Heart right ventricle (tissue), 16 donors: ENCODE measurements at regions of chr17 and their contacts with region 1.

Region 1: GRCh38 chr17:42918902-42919521 is 18.4 kb downstream of the G6PC1 start:
- DNase-seq: no peak
- ATAC-seq: no peak
- H3K4me3 ChIP-seq: no peak overlapping the region
- H3K27ac ChIP-seq: peak overlapping the region in 1 of 10 donors; percentile 67
- H3K4me1 ChIP-seq: peaks cover 0 to 49% (median 16%) of the 10 kb centered on the region in 9 donors
- H3K27me3 ChIP-seq: no peaks in the 10 kb centered on the region
- CTCF ChIP-seq: no peak

Region 2: DNA sequence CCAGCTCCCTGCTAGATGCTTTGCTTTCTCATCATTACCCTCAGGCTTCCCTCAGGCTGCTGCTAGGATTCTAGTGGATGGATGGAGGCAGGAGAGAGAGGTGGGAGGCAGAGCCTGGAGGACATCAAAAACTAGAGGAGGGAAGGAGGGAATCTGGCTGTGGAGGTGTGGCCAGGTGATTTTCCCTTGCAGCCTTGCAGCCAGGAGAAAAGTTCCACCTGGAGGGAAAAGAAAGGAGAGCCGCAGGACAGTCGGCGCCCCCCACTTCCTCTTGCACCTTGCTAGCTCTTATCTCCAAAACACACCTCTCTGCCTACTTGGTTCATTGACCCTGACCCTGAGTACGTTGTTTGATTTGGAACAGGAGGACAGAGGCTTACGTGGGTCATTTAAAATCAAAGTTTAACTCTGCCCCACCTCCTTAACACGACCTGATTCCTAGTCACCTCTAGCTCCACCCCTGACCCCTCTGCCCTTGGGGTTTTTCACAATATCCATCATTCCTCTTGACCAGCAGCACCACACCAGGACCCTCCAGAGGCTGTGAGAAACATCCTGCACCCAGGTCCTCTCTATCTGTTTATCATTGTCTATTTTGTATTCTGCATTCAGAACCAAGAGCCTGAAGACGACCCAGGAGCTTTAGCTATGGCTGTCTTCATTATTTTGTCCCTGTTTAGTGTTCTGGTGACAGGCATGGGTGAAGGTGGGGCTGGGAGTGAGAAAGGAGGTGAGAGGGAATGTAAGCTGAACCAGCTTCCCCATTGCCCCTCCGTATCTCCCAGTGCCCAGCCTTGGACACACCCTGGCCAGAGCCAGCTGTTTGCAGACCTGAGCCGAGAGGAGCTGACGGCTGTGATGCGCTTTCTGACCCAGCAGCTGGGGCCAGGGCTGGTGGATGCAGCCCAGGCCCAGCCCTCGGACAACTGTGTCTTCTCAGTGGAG is 52.1 kb before region 1 on chr17:
- intact Hi-C with region 1: loop called in 1 of 10 experiments (anchors 10 kb)
- DNase-seq: no peak
- ATAC-seq: peak in 1 of 8 donors; percentile 38
- H3K4me3 ChIP-seq: no peak overlapping the region
- H3K27ac ChIP-seq: no peak overlapping the region
- H3K4me1 ChIP-seq: peaks cover 0 to 7% (median 0%) of the 10 kb centered on the region in 9 donors
- H3K27me3 ChIP-seq: no peaks in the 10 kb centered on the region
- CTCF ChIP-seq: no peak

Region 3: DNA sequence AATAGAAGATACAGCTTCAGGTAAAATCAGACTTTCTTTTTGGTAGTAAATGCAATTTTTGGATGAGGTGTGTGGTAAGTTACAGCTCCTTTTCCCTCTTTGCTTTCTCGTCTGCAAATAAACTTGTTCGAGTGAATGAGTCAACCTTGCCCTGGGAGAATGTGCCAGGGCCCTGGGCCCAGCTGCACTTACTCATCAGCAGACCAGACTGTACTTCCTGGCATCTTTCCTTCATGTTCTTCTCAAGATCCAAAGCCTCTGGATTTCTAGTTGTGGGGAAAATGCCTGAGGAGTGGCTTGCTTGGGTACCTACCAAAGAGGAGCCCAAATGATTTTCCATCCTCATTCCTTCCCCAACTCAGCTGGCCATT is 23.8 kb before region 1 on chr17:
- intact Hi-C with region 1: no loop called
- DNase-seq: peak in 1 of 2 donors; percentile 42
- ATAC-seq: peak in 1 of 8 donors; percentile 86
- H3K4me3 ChIP-seq: no peak overlapping the region
- H3K27ac ChIP-seq: peak overlapping the region in 5 of 10 donors; percentile 1 to 94 (median 81)
- H3K4me1 ChIP-seq: peaks cover 16 to 51% (median 43%) of the 10 kb centered on the region in 9 donors
- H3K27me3 ChIP-seq: no peaks in the 10 kb centered on the region
- CTCF ChIP-seq: no peak

Region 4: DNA sequence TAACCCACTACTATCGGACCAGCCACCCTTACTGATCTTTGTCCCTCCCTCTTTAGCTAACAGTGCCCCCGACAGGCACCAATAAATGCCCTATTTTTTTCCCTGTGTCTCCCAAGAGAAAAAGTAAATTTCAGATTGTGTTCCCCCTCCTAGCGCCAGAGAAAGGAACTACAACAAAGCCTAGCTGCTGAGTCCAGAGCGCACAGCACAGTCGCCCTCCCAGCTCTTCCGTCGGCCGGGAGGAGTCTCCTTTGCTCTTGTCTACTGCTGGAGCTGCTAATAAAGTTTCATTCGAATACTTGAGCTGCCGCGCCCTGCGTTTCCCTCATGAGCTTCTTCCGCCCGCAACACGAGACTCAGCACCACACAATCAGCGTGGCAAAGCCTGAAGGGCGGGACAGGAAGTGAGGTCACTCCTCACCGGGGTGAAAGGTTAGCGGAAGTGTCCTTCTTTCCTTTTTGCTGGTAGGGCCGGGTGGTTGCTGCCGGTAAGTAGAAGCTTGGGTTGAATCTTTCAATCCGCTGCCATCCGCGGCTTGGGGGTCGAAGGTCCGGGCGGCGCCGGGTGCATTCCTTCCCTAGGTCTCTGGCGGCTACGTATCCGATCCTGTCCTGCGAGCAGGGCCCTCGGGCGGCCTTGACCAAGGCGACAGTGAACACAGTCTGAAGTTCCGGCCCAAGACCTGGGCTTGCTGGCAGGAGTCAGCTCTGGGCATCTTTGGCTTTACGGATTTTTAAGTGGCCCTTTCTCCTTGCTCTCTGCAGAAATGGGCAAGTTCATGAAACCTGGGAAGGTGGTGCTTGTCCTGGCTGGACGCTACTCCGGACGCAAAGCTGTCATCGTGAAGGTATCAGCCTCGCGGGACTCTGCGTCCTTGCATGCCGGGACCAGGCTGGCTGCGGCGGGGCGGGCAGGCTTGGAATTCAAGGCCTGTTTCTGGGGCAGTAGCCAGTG is 79.2 kb after region 1 on chr17 and contains the start of gene RPL27:
- intact Hi-C with region 1: no loop called
- DNase-seq: peak; percentile 95 to 99
- ATAC-seq: peak; percentile 97 to 99 (median 99)
- H3K4me3 ChIP-seq: peak within 1 kb of the TSS; percentile 69 to 94 (median 84)
- H3K27ac ChIP-seq: peak within 1 kb of the TSS; percentile 63 to 96 (median 88)
- H3K4me1 ChIP-seq: peaks cover 5 to 45% (median 22%) of the 10 kb centered on the region in 9 donors
- H3K27me3 ChIP-seq: no peaks in the 10 kb centered on the region
- CTCF ChIP-seq: peak; percentile 77 to 94 (median 89)
- total RNA-seq, gene RPL27: 388 to 841 (median 519) TPM